Motor neuron (in vitro differentiated cells): ENCODE measurements at regions of chr6 and their contacts with region 1.

Region 1: DNA sequence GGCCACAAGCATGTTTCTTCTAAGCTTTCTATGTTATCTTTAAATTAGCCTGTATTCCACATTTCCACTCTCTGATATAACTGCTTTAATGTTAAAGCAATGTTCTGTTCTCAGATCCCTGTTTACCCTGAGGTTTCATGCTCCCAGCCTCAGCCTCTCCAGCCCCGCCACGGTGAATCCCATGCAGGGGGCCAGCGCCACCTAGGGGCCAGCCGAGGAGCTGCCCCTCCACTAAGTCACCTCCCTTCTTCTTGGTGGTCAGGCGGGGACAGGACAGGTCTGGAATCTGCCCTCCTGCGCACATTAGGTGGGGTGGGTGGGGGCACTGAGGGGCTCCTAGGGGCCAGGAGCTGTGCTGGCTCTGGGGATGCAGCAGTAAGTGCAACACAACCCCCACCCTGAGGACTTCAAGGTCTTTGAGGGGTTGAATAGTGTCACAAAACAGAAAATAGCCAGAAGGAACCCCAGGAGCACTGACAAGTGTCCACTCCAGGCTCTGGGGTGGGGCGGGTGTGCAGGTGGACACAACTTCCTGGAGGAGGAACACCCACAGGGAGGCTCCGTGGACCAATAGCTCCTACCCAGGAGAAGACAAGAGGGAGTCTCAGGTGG is 61.6 kb downstream of the RAB44 start:
- ATAC-seq: peak; percentile 85 to 100 (median 92)
- H3K4me3 ChIP-seq: no peak overlapping the region
- H3K27ac ChIP-seq: no peak overlapping the region
- H3K4me1 ChIP-seq: peaks cover 13 to 15% of the 10 kb centered on the region in 2 donors

Region 2: DNA sequence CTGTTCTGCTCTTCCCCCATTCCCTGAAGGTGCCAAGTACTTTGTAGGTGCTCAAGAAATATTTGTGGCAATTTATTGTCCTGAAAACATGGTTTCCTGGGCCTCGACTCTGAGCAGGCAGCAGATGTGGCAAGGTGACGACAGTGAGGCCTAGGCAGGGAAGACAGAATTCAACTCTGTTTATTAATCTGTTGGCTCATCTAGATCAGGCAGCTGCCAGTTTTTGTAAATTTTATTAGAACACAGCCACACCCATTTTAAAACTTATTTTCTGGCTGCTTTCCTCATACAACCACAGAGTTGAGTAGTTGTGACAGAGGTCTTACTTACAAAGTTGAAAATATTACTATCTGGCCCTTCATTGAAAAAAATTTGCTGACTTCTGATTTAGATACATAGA is 707.2 kb before region 1 on chr6:
- in situ Hi-C with region 1: no loop called
- ATAC-seq: peak in 3 of 8 experiments; percentile 49 to 88 (median 88)
- H3K4me3 ChIP-seq: no peak overlapping the region
- H3K27ac ChIP-seq: no peak overlapping the region
- H3K4me1 ChIP-seq: no peaks in the 10 kb centered on the region

Region 3: DNA sequence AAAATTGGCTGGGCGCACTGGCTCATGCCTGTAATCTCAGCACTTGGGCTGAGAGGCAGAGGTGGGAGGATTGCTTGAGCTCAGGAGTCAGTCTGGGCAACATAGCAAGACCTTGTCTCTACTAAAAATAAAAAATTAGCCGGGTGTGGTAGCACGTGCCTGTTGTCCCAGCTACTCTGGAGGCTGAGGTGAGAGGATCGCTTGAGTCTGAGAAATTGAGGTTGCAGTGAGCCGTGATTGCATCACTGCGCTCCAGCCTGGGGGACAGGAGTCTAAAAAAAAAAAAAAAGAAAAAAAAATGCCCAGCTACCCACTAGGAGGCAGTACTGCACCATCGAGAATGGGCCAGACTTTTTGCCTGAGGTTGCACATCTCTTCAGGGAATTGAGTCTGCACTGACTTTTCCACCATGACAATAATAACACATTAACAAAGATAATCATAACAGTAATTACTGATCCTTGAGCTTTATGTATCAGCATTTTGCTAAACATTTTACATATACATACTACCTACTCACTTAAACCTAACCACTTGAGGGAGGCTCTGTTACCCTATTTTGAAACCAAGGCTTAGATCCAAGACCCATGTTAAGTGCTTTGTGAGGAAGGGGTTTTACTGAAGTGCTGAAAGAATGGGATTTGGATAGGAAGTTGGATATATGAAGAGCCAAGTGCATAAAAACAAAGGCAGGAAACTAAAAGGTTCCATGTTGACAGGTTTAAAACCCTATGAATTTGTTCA is 144.1 kb before region 1 on chr6:
- in situ Hi-C with region 1: loop called in 3 of 9 experiments (anchors 10 to 25 kb)
- ATAC-seq: peak in 6 of 8 experiments; percentile 4 to 65 (median 28)
- H3K4me3 ChIP-seq: no peak overlapping the region
- H3K27ac ChIP-seq: no peak overlapping the region
- H3K4me1 ChIP-seq: no peaks in the 10 kb centered on the region

Region 4: GRCh38 chr6:36979347-36979742 is 220.1 kb after region 1 on chr6:
- in situ Hi-C with region 1: no loop called
- ATAC-seq: peak; percentile 34 to 83 (median 72)
- H3K4me3 ChIP-seq: no peak overlapping the region
- H3K27ac ChIP-seq: peak overlapping the region in 1 of 2 donors; percentile 12
- H3K4me1 ChIP-seq: peaks cover 2 to 10% of the 10 kb centered on the region in 2 donors